CD4-positive, alpha-beta memory T cell (primary cell): ENCODE measurements at regions of chr19 and their contacts with region 1.

Region 1: GRCh38 chr19:55407800-55408532 is 378 bp upstream of the UBE2S start:
- DNase-seq: peak; percentile 96 to 99 (median 98)
- H3K4me3 ChIP-seq: peak overlapping the region; percentile 64 to 69
- H3K4me3 Mint-ChIP-seq: peak overlapping the region; percentile 89 to 96 (median 93)
- H3K27ac ChIP-seq: peak overlapping the region; percentile 99
- H3K27ac Mint-ChIP-seq: peak overlapping the region; percentile 98 to 100 (median 99)
- H3K4me1 ChIP-seq: peaks cover 24% of the 10 kb centered on the region
- H3K4me1 Mint-ChIP-seq: peaks cover 22 to 32% (median 28%) of the 10 kb centered on the region in 4 donors
- H3K27me3 ChIP-seq: no peaks in the 10 kb centered on the region
- H3K27me3 Mint-ChIP-seq: no peaks in the 10 kb centered on the region

Region 2: DNA sequence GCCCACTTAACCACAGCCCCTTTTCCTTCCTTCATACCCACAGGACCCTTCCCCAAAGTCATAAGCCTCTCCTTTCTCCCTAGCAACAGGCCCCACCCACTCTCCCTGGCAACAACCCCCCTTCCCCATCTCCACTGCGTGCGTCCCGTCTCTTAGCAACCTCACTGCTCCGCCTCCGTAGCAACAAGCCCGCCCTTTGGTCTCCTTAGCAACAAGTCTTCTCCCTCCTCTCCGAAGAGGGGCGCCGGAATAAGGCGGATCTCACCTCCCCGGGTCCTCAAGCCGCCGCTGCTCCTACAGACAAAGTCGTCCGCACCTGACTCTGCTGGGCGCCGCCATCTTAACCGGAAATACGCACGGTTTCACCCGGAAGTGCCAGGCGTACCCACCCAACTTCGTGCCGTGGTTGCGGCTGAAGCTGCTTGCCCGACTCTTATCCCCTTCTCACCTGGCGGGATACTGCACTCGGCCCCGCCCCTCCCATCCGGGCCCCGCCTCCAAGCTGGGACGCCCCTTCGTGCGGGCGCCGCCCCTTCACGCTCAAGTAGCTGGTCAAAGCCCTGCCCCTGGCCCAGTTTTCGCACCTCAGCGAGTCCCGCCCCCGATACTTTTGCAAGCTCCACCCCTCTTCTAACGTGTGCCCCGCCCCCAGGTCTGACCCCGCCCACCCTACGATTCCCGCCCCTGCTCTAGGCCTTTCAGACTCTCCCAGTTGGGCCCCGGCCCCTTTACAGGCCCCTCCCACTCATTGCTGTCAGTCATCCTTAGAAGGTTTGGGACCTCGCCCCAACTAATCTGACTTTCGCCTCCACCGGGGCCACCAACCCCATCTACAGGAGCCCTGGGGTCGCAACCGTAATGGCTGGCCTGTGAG is 128.0 kb before region 1 on chr19 and contains the start of gene HSPBP1:
- CTCF ChIA-PET with region 1: no interaction called
- POLR2A ChIA-PET with region 1: interaction called, 14 read pairs
- intact Hi-C with region 1: no loop called
- DNase-seq: peak; percentile 96 to 97 (median 97)
- H3K4me3 ChIP-seq: peak within 1 kb of the TSS; percentile 95 to 98
- H3K4me3 Mint-ChIP-seq: peak within 1 kb of the TSS; percentile 92 to 100 (median 98)
- H3K27ac ChIP-seq: peak within 1 kb of the TSS; percentile 69
- H3K27ac Mint-ChIP-seq: peak within 1 kb of the TSS; percentile 87 to 100 (median 100)
- H3K4me1 ChIP-seq: peaks cover 39% of the 10 kb centered on the region
- H3K4me1 Mint-ChIP-seq: peaks cover 24 to 55% (median 34%) of the 10 kb centered on the region in 4 donors
- H3K27me3 ChIP-seq: no peaks in the 10 kb centered on the region
- H3K27me3 Mint-ChIP-seq: no peaks in the 10 kb centered on the region
- total RNA-seq, gene HSPBP1: 17.9 to 18.5 TPM

Region 3: GRCh38 chr19:55301459-55302317 is 106.3 kb before region 1 on chr19:
- CTCF ChIA-PET with region 1: interaction called, 3 read pairs
- POLR2A ChIA-PET with region 1: interaction called, 17 read pairs
- intact Hi-C with region 1: no loop called
- DNase-seq: peak; percentile 87 to 90 (median 88)
- H3K4me3 ChIP-seq: peak overlapping the region; percentile 34 to 49
- H3K4me3 Mint-ChIP-seq: peak overlapping the region; percentile 75 to 86 (median 80)
- H3K27ac ChIP-seq: peak overlapping the region; percentile 22
- H3K27ac Mint-ChIP-seq: peak overlapping the region; percentile 57 to 94 (median 82)
- H3K4me1 ChIP-seq: peaks cover 11% of the 10 kb centered on the region
- H3K4me1 Mint-ChIP-seq: peaks cover 6 to 21% (median 10%) of the 10 kb centered on the region in 4 donors
- H3K27me3 ChIP-seq: no peaks in the 10 kb centered on the region
- H3K27me3 Mint-ChIP-seq: no peaks in the 10 kb centered on the region

Region 4: GRCh38 chr19:55385740-55386529 is 22.0 kb before region 1 on chr19 and contains the start of gene RPL28:
- CTCF ChIA-PET with region 1: interaction called, 5 read pairs
- POLR2A ChIA-PET with region 1: interaction called, 247 read pairs
- intact Hi-C with region 1: loop called (anchors 1 kb)
- DNase-seq: peak; percentile 98 to 100 (median 99)
- H3K4me3 ChIP-seq: peak within 1 kb of the TSS; percentile 85 to 88
- H3K4me3 Mint-ChIP-seq: peak within 1 kb of the TSS; percentile 99 to 100 (median 100)
- H3K27ac ChIP-seq: peak within 1 kb of the TSS; percentile 94
- H3K27ac Mint-ChIP-seq: peak within 1 kb of the TSS; percentile 98 to 100 (median 99)
- H3K4me1 ChIP-seq: peaks cover 68% of the 10 kb centered on the region
- H3K4me1 Mint-ChIP-seq: peaks cover 39 to 88% (median 63%) of the 10 kb centered on the region in 4 donors
- H3K27me3 ChIP-seq: no peaks in the 10 kb centered on the region
- H3K27me3 Mint-ChIP-seq: no peaks in the 10 kb centered on the region
- total RNA-seq, gene RPL28: 3,136 to 3,159 TPM

Region 5: DNA sequence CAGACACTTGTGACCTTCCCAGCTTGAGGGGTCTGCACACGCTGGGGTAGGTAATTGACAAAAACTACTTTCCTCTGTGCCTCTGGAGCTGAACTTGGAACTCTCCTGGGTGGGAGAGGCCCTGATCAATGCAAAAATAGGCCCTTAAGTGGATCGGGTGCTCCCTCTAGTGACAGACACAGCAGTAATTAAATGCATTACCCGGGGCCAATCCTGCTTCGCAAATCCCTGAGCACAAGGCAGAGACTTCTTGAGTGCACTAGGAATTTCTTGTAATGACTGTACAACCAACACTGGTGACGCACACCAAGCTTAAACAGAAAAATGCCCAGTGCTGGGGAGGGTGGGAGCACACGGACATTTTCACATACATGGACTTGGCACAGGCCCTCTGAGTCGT is 10.2 kb after region 1 on chr19:
- CTCF ChIA-PET with region 1: interaction called, 14 read pairs
- POLR2A ChIA-PET with region 1: interaction called, 10 read pairs
- intact Hi-C with region 1: no loop called
- DNase-seq: peak; percentile 54 to 61 (median 60)
- H3K4me3 ChIP-seq: no peak overlapping the region
- H3K4me3 Mint-ChIP-seq: no peak overlapping the region
- H3K27ac ChIP-seq: no peak overlapping the region
- H3K27ac Mint-ChIP-seq: peak overlapping the region in 3 of 7 donors; percentile 48 to 74 (median 68)
- H3K4me1 ChIP-seq: peaks cover 25% of the 10 kb centered on the region
- H3K4me1 Mint-ChIP-seq: peaks cover 9 to 29% (median 20%) of the 10 kb centered on the region in 4 donors
- H3K27me3 ChIP-seq: no peaks in the 10 kb centered on the region
- H3K27me3 Mint-ChIP-seq: peaks cover 0 to 3% of the 10 kb centered on the region in 2 donors

Region 6: GRCh38 chr19:55446060-55446459 is 38.1 kb after region 1 on chr19:
- CTCF ChIA-PET with region 1: no interaction called
- POLR2A ChIA-PET with region 1: no interaction called
- intact Hi-C with region 1: no loop called
- DNase-seq: no peak
- H3K4me3 ChIP-seq: no peak overlapping the region
- H3K4me3 Mint-ChIP-seq: no peak overlapping the region
- H3K27ac ChIP-seq: no peak overlapping the region
- H3K27ac Mint-ChIP-seq: no peak overlapping the region
- H3K4me1 ChIP-seq: peaks cover 11% of the 10 kb centered on the region
- H3K4me1 Mint-ChIP-seq: peaks cover 12 to 21% (median 18%) of the 10 kb centered on the region in 4 donors
- H3K27me3 ChIP-seq: peaks cover 28% of the 10 kb centered on the region
- H3K27me3 Mint-ChIP-seq: peaks cover 35 to 36% of the 10 kb centered on the region in 2 donors

Region 7: GRCh38 chr19:55461259-55461973 is 53.5 kb after region 1 on chr19 and contains the start of gene ISOC2:
- CTCF ChIA-PET with region 1: no interaction called
- POLR2A ChIA-PET with region 1: interaction called, 6 read pairs
- intact Hi-C with region 1: loop called (anchors 1 kb)
- DNase-seq: peak; percentile 100
- H3K4me3 ChIP-seq: peak within 1 kb of the TSS; percentile 82 to 97
- H3K4me3 Mint-ChIP-seq: peak within 1 kb of the TSS; percentile 86 to 97 (median 92)
- H3K27ac ChIP-seq: peak within 1 kb of the TSS; percentile 67
- H3K27ac Mint-ChIP-seq: peak within 1 kb of the TSS; percentile 72 to 97 (median 91)
- H3K4me1 ChIP-seq: peaks cover 18% of the 10 kb centered on the region
- H3K4me1 Mint-ChIP-seq: peaks cover 11 to 31% (median 21%) of the 10 kb centered on the region in 4 donors
- H3K27me3 ChIP-seq: no peaks in the 10 kb centered on the region
- H3K27me3 Mint-ChIP-seq: no peaks in the 10 kb centered on the region
- total RNA-seq, gene ISOC2: 9.9 to 13.7 TPM

Region 8: GRCh38 chr19:55643348-55644176 is 235.6 kb after region 1 on chr19 and contains the start of gene ZNF581:
- CTCF ChIA-PET with region 1: no interaction called
- POLR2A ChIA-PET with region 1: no interaction called
- intact Hi-C with region 1: loop called (anchors 5 kb)
- DNase-seq: peak; percentile 77 to 85 (median 79)
- H3K4me3 ChIP-seq: peak within 1 kb of the TSS; percentile 53 to 83
- H3K4me3 Mint-ChIP-seq: peak within 1 kb of the TSS; percentile 86 to 96 (median 92)
- H3K27ac ChIP-seq: peak within 1 kb of the TSS; percentile 69
- H3K27ac Mint-ChIP-seq: peak within 1 kb of the TSS; percentile 87 to 99 (median 94)
- H3K4me1 ChIP-seq: peaks cover 49% of the 10 kb centered on the region
- H3K4me1 Mint-ChIP-seq: peaks cover 29 to 62% (median 45%) of the 10 kb centered on the region in 4 donors
- H3K27me3 ChIP-seq: no peaks in the 10 kb centered on the region
- H3K27me3 Mint-ChIP-seq: no peaks in the 10 kb centered on the region
- total RNA-seq, gene ZNF581: 21.2 to 23.4 TPM